ENCODE measurements at regions of chr17 and their contacts with region 1.

Region 1: GRCh38 chr17:55238179-55238930 is 26.4 kb upstream of the HLF start:
- DNase-seq: peak; percentile 92
- ATAC-seq: peak; percentile 98
- H3K4me3 ChIP-seq: peak overlapping the region; percentile 45 to 63
- H3K27ac ChIP-seq: peak overlapping the region; percentile 59
- H3K4me1 ChIP-seq: peaks cover 12 to 16% of the 10 kb centered on the region in 2 experiments
- H3K27me3 ChIP-seq: no peaks in the 10 kb centered on the region
- CTCF ChIP-seq: no peak
- POLR2A ChIP-seq: peak; percentile 66
- RAD21 ChIP-seq: no peak

Region 2: DNA sequence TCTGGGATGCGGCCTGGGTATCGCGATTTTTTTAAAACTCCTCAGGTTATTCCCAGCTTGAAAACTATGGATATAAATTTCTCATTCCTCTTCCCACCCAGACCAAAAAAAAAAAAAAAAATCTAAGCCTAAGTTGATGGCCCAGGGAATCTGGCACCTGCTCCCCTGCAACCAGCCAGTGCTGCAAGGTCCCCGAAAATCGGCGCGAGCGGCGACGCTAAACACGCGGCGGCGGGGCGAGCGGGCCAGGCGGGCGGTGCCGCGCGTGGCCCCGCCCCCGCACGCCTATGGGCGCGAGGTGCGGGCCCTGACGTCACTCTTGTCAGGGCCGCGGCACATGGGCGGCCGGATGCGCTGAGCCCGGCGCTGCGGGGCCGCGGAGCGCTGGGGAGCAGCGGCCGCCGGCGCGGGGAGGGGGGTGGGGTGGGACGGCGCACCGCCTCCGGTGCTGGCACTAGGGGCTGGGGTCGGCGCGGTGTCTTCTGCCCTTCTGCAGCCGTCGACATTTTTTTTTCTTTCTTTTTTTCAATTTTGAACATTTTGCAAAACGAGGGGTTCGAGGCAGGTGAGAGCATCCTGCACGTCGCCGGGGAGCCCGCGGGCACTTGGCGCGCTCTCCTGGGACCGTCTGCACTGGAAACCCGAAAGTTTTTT is 26.4 kb after region 1 on chr17 and contains the start of gene HLF:
- CTCF ChIA-PET with region 1: no interaction called
- POLR2A ChIA-PET with region 1: interaction called, 3 read pairs
- RAD21 ChIA-PET with region 1: no interaction called
- intact Hi-C with region 1: loop called (anchors 1 kb)
- DNase-seq: peak; percentile 58
- ATAC-seq: peak; percentile 99
- H3K4me3 ChIP-seq: no peak within 1 kb of the TSS; a peak in 1 of 4 replicates
- H3K27ac ChIP-seq: no peak within 1 kb of the TSS
- H3K4me1 ChIP-seq: peaks cover 4 to 10% of the 10 kb centered on the region in 2 experiments; a peak in 3 of 4 replicates
- H3K27me3 ChIP-seq: no peaks in the 10 kb centered on the region
- CTCF ChIP-seq: no peak
- POLR2A ChIP-seq: no peak
- RAD21 ChIP-seq: no peak
- total RNA-seq, gene HLF: 1.5 TPM